Activated CD4-positive, alpha-beta memory T cell treated with anti-CD3 and anti-CD28 coated beads, Interleukin-2, amount 10 ng/mL, durations not matched to agents 7 days and 5 days (primary cell): ENCODE measurements at regions of chr2 and their contacts with region 1.

Region 1: DNA sequence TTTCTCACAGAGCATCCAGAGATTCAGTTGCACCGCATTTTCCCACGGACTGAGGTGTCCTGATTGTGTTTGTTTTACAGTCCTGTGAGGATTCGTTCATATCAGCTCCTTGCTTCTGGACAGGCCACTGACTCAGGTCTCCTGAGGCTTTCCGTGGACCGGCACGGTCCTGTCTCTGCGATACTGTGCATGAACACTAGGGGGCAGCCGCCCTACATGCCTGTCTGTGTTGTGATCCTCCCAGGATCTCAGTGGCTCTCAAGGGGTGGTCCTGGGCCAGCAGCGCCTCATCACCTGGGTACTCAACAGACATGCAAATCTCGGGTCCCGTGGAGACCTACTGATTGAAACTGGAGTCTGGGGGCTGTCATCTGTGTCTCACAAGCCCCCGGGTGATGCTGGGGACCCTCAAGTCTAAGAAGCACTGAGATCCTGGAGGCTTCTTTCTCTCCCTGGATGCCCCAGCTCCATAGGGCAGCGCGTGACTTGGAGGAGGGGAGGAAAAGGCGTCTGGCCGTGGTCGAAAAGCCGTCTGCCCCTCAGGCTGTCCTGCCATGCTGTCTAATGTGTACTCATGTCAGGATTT is 28.9 kb downstream of the IL1R2 start:
- DNase-seq: peak; percentile 83
- H3K4me3 Mint-ChIP-seq: no peak overlapping the region
- H3K27ac Mint-ChIP-seq: no peak overlapping the region
- H3K4me1 Mint-ChIP-seq: peaks cover 17% of the 10 kb centered on the region
- H3K27me3 Mint-ChIP-seq: peaks cover 2% of the 10 kb centered on the region

Region 2: DNA sequence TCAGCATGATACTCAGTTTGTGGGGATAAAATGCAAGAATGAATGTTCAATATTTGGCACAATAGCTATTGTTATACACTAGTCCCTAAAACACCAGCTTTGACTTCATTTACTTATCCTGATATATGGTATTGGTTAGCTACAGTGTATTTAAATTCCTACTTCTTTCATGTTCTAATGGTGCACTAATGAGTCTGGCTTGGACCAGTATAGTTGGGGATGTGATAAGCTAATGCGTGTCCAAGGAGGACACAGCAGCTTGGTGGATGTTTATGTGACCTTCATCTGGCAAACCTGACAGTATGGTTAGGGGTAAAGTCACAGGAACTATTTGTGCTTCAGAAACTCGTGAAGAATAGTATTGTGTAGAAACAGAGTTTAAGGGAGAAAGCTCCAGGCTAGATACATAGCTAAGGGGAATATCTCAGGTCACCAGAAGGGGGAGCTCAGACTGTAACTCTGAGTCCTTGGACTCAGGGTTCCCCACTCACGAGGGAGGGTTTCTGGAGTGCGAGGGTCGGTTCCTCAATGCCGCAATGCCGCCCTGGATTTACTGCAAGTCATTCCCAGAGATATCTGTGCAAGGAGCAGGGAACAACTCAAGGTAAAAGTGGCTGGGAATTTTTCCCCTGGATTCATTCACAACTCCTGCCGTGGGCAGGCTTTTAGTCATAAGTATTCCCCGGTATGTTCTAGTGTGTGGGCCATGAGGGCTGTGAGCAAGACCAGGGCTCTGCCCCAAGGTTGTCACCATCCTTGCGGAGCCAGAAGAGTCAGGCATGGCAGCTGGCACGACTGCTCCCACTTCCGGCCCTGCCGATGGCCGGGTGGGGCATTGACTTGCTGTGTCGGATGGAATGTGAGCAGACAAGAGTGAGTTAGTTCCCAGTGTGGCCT is 14.5 kb before region 1 on chr2:
- CTCF ChIA-PET with region 1: interaction called, 31 read pairs
- POLR2A ChIA-PET with region 1: interaction called, 10 read pairs
- DNase-seq: no peak
- H3K4me3 Mint-ChIP-seq: no peak overlapping the region
- H3K27ac Mint-ChIP-seq: no peak overlapping the region
- H3K4me1 Mint-ChIP-seq: peaks cover 18% of the 10 kb centered on the region
- H3K27me3 Mint-ChIP-seq: no peaks in the 10 kb centered on the region

Region 3: DNA sequence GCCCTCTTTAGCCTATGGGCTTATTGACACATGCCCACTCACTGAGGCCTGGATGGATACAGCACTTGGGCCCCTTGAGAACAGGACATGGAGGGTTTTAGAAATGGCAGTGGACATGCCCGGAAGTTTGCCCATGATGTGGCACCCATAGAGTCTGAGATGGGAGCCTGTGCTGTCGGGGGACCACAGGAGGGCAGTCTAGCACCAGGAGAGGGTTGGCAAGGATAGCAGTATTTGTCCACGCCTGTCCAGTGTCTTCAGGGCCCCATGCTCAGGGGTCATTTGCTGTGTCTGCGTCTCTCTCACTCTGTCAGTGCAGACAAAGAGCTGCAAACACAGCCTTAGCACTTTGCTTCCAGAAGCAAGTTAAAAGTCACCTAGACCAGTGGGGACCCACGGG is 214.8 kb after region 1 on chr2:
- CTCF ChIA-PET with region 1: interaction called, 95 read pairs
- POLR2A ChIA-PET with region 1: interaction called, 4 read pairs
- DNase-seq: peak; percentile 35
- H3K4me3 Mint-ChIP-seq: no peak overlapping the region
- H3K27ac Mint-ChIP-seq: no peak overlapping the region
- H3K4me1 Mint-ChIP-seq: peaks cover 41% of the 10 kb centered on the region
- H3K27me3 Mint-ChIP-seq: peaks cover 7% of the 10 kb centered on the region

Region 4: DNA sequence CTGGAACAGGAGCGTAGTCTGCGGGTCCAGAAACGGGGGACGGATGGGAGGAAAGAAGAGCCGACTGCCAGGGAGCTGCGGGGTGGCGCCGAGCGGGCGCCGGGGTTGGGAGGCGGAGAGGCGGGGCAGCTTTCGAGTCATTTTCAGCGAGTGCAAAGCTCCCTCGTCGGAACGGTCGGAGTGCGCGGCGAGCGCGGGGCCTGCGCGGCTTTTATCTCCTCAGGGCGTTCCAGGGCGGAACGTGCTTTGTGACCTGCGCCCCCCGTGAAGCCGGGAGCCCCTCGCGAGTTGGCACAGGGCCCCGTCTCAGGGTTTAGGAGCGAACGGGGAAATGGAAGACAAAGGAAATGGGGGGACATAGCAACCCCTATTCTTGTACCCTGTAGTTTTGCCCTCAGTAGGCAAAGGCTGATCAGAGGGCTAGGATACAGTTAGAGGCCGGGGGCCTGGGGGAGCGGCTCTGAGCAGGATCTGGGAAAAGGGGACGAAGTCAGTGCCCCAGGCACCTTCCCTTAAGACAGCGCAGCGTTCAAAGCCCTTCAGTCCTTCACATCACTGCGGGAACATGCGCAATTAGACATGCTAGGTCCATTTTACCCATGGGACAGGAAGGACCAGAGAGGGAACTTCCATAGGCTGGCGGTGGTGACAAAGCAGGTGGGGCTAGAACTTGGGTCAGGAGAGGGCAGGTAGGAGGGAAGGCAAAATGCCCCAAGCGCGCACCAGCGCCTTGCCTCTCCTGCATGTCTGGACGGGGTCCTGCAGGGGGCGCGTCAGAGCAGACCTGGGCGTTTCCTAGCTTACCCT is 230.6 kb after region 1 on chr2:
- CTCF ChIA-PET with region 1: interaction called, 11 read pairs
- POLR2A ChIA-PET with region 1: no interaction called
- DNase-seq: peak; percentile 69
- H3K4me3 Mint-ChIP-seq: peak overlapping the region; percentile 76
- H3K27ac Mint-ChIP-seq: peak overlapping the region; percentile 61
- H3K4me1 Mint-ChIP-seq: peaks cover 41% of the 10 kb centered on the region
- H3K27me3 Mint-ChIP-seq: peaks cover 6% of the 10 kb centered on the region